ENCODE measurements at regions of chr1 and their contacts with region 1.

Region 1: DNA sequence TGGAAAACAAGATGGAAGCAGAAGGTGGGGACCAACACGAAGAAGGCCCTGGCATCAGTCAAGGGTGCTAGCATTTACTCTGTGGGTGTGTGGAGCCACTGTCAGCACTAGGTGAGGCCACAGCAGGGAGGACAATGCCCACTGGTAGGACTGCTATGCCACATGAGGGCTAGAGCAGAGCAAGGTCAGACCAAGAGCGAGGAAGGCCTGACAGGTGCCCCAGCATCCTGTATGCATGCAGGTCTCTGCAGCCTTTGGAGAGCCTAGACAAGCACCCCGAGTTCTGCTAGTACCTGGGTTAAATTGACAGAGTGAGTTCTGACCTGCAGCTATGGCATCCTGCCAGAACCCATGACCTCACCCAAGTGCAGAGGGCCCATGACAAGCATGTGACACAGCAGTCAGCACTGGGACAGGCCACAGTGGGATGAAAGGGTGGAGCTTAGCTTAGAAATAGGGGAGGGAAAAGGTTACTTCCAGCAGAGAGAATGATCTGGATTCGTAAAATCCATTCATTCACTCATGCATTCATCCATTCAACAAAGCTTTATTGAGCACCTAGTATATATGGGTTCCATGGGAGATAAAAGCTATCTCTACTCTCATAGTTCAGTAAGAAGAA is 9.0 kb upstream of the CSF1 start:
- DNase-seq: peak in 1 of 2 donors; percentile 41
- ATAC-seq: peak in 5 of 8 donors; percentile 32 to 60 (median 47)
- H3K4me3 ChIP-seq: no peak overlapping the region
- H3K27ac ChIP-seq: no peak overlapping the region
- H3K4me1 ChIP-seq: peaks cover 0 to 74% (median 33%) of the 10 kb centered on the region in 9 donors
- H3K27me3 ChIP-seq: no peaks in the 10 kb centered on the region
- CTCF ChIP-seq: no peak

Region 2: DNA sequence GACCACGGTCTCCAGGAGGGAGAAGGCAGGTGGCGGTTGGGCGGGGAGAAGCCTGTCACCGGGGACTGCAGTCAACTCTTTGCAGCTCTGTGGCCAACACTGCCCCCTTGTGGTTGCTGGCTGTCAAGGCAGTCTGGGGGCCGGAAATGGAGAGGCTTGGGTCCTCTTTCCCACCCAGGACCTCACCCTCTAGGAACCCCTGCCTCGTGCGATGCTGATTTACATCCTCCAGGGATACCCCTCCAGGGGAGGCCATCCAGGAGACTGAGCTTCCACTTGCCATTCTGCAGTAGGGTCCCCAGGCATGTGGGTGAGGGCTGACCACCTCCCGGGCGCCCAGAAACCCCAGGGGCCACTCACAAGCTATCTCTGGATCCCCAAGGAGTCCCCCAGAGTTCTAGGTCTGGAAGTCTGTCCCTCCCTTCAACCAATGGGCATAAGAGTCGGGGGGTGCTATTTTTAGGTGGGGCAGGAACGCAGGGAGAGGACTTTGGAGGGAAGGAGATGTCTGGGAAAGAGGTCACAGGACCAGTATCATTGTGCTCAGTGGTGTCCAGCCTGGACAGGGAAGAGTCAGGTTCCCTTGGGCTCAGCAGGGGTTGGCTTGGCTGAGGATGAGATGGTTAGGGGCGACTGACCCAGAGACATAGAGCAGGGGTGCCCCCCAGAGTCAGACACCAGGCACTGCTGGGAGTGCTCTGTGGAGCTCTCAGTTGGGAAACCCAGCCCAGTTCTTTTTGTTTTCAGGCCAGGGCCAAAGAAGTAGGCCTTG is 369.1 kb before region 1 on chr1:
- intact Hi-C with region 1: no loop called
- DNase-seq: peak; percentile 86 to 87
- ATAC-seq: peak; percentile 70 to 88 (median 78)
- H3K4me3 ChIP-seq: peak overlapping the region in 7 of 10 donors; percentile 14 to 39 (median 30)
- H3K27ac ChIP-seq: peak overlapping the region in 9 of 10 donors; percentile 15 to 80 (median 63)
- H3K4me1 ChIP-seq: peaks cover 9 to 64% (median 36%) of the 10 kb centered on the region in 9 donors
- H3K27me3 ChIP-seq: no peaks in the 10 kb centered on the region
- CTCF ChIP-seq: peak; percentile 87 to 98 (median 93)

Region 3: GRCh38 chr1:109722908-109723691 is 178.5 kb before region 1 on chr1:
- intact Hi-C with region 1: no loop called
- DNase-seq: no peak
- ATAC-seq: no peak
- H3K4me3 ChIP-seq: no peak overlapping the region
- H3K27ac ChIP-seq: no peak overlapping the region
- H3K4me1 ChIP-seq: peaks cover 0 to 6% (median 0%) of the 10 kb centered on the region in 9 donors
- H3K27me3 ChIP-seq: no peaks in the 10 kb centered on the region
- CTCF ChIP-seq: no peak

Region 4: GRCh38 chr1:109816175-109816811 is 85.3 kb before region 1 on chr1:
- intact Hi-C with region 1: loop called in 1 of 10 experiments (anchors 5 kb)
- DNase-seq: no peak
- ATAC-seq: peak in 4 of 8 donors; percentile 18 to 43 (median 32)
- H3K4me3 ChIP-seq: no peak overlapping the region
- H3K27ac ChIP-seq: peak overlapping the region in 1 of 10 donors; percentile 2
- H3K4me1 ChIP-seq: peaks cover 2 to 65% (median 20%) of the 10 kb centered on the region in 9 donors
- H3K27me3 ChIP-seq: no peaks in the 10 kb centered on the region
- CTCF ChIP-seq: no peak

Region 5: DNA sequence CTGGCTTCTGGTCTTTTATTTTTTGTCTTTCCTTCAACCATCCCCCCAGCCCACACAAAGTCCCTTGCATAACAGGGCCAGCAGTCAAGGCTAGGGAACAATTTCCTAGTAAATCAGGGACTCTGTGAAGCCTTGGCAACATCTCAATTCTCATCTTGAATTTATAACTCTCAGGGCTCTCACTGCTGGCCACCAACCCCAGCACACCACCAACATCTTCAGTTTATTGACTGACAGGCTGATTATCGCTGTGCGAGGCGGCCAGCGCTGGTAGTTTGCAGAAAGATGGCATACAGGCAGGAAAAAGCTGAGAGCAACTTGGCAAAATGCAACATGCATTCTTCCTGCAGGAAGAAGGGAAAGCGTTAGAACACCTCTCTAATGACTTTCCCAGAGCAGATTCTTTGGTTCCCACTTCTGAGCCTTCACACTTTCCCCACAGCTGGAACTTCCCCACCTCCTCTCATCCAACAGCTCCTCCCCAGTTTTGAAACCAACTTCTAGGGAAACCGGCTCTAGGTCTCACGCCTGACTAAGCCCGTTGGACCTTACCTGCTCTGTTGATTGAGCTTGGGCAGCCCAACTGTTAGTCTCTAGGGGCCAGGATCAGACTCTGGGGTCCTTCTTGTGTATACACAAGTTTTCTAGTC is 17.3 kb before region 1 on chr1:
- intact Hi-C with region 1: loop called in 1 of 10 experiments (anchors 2 kb)
- DNase-seq: no peak
- ATAC-seq: peak in 1 of 8 donors; percentile 15
- H3K4me3 ChIP-seq: no peak overlapping the region
- H3K27ac ChIP-seq: peak overlapping the region in 6 of 10 donors; percentile 7 to 71 (median 40)
- H3K4me1 ChIP-seq: peaks cover 10 to 53% (median 26%) of the 10 kb centered on the region in 9 donors
- H3K27me3 ChIP-seq: no peaks in the 10 kb centered on the region
- CTCF ChIP-seq: no peak

Region 6: DNA sequence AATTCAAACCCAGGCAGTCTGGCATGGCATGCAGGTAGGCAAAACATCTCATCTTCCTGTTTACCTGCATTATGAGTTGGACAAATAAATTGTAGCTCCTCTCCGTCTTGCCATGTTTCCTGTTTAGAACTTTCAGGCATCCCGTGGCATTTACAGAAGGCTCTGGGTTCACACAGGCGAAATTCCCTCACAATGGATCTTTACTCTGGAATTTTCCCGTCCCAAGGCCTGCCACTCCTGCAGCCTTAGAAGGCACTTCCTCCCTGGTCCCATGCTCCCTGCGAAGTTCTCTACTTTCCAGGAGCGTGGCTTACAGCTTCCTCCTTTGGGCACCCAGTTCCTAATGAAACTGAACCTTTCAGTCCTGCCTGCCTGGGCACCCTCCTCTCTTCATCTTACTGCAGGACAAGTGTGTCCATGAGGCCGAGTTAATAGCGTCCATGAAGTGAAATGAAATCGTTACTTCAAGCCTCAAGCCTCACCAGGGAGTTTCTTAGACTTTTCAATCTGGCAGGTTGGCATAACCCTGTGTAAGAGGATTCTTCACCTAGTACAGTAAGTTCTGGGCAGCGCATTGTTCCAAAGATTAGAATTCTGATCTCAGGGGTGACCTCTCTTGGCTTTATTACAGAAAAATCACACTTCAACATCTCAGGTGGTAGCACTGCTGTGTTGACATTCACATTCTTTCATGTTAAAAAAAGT is 46.1 kb after region 1 on chr1:
- intact Hi-C with region 1: no loop called
- DNase-seq: no peak
- ATAC-seq: peak in 4 of 8 donors; percentile 19 to 49 (median 40)
- H3K4me3 ChIP-seq: no peak overlapping the region
- H3K27ac ChIP-seq: peak overlapping the region in 6 of 10 donors; percentile 6 to 68 (median 23)
- H3K4me1 ChIP-seq: peaks cover 0 to 20% (median 8%) of the 10 kb centered on the region in 9 donors
- H3K27me3 ChIP-seq: no peaks in the 10 kb centered on the region
- CTCF ChIP-seq: no peak

Measured in heart right ventricle (tissue), 16 donors.